Activated naive CD4-positive, alpha-beta T cell treated with anti-CD3 and anti-CD28 coated beads for 36 hours (primary cell): ENCODE measurements at regions of chr11 and their contacts with region 1.

Region 1: GRCh38 chr11:95231127-95231880 is at the start of gene SESN3:
- DNase-seq: peak; percentile 99
- H3K4me3 Mint-ChIP-seq: no peak within 1 kb of the TSS
- H3K27ac Mint-ChIP-seq: peak within 1 kb of the TSS; percentile 83
- H3K4me1 Mint-ChIP-seq: peaks cover 52% of the 10 kb centered on the region
- H3K27me3 Mint-ChIP-seq: no peaks in the 10 kb centered on the region
- total RNA-seq, gene SESN3: 17.5 to 18.1 TPM

Region 2: DNA sequence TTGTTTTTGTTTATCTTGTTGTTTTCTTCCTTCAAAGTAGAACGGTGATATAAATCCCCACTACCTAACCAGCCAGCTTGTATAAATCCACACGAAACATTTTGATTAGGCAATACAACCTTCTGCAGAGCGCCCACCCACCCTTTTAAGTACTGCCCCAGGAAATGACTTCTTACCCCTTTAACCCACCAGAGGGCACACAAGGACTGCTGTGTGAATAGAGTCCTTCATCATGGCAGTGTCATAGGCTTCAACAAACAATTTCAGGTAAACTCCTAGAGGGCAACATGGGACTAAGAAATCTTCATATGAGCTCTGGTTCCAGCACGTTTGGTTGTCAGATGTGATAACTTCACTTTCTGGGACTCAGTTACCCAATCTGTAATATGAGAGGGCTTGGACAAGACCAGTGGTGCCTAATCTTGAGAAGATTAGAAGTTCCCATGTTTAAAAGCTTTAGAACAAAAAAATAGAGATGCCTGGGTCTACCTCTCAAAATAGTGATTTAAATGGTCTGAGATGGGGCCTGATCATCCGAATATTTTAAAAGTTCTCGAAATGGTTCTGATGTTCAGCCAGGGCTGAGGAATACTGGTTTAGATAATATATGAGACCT is 608.1 kb before region 1 on chr11:
- CTCF ChIA-PET with region 1: no interaction called
- intact Hi-C with region 1: no loop called
- DNase-seq: peak; percentile 78
- H3K4me3 Mint-ChIP-seq: no peak overlapping the region
- H3K27ac Mint-ChIP-seq: no peak overlapping the region
- H3K4me1 Mint-ChIP-seq: no peaks in the 10 kb centered on the region
- H3K27me3 Mint-ChIP-seq: peaks cover 7% of the 10 kb centered on the region

Region 3: DNA sequence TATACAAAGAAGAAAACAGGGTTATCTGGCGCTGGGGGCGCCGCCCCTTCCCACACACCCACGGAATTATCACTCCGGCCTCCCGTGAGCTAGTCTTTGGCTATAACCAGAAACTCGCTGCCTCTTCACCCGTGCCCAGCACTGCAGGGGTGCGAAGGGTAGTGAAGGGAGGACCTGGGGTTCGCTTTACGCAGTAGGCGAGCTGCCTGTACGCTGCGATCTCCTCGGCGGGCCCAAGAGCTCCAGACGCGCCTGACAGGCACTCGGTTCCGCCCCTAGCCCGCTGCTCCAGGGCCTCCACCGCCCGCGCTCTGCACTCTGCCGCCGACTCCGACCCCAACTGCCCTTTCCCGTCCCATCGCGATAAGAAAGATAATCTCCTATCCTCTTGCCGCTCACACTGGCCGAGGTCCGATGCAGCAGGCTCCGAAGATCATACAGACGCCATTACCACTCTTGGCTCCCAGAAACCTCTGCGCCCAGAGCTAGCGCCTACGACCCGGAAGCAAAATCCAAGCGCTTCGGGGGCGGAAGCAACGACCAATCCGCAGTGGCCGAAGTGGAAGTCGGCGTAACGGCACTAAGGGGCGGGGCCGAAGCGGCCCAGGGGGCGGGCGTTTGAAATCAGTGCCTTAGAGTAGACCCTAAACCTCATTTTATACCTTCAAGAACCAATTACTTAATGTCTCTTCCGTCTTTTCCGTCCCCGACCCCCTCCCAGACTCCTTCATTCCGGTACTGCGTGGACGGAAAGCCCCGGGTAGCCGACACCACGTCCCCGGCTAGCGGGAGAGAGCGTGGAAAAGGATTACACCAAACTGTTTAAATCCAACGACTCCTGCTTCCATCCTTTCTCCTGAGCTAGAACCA is 258.0 kb before region 1 on chr11 and contains the starts of genes CWC15 and KDM4D:
- CTCF ChIA-PET with region 1: no interaction called
- intact Hi-C with region 1: loop called (anchors 5 kb)
- DNase-seq: peak; percentile 97
- H3K4me3 Mint-ChIP-seq: peak within 1 kb of the TSS; percentile 97
- H3K27ac Mint-ChIP-seq: peak within 1 kb of the TSS; percentile 89
- H3K4me1 Mint-ChIP-seq: peaks cover 38% of the 10 kb centered on the region
- H3K27me3 Mint-ChIP-seq: no peaks in the 10 kb centered on the region
- total RNA-seq, gene CWC15: 70.6 to 72.3 TPM
- total RNA-seq, gene KDM4D: 1.7 to 2.1 TPM

Region 4: GRCh38 chr11:95055283-95055897 is 175.9 kb before region 1 on chr11:
- CTCF ChIA-PET with region 1: no interaction called
- intact Hi-C with region 1: no loop called
- DNase-seq: no peak
- H3K4me3 Mint-ChIP-seq: no peak overlapping the region
- H3K27ac Mint-ChIP-seq: no peak overlapping the region
- H3K4me1 Mint-ChIP-seq: no peaks in the 10 kb centered on the region
- H3K27me3 Mint-ChIP-seq: peaks cover 21% of the 10 kb centered on the region

Region 5: GRCh38 chr11:95182397-95182796 is 48.9 kb before region 1 on chr11:
- CTCF ChIA-PET with region 1: no interaction called
- intact Hi-C with region 1: loop called (anchors 2 kb)
- DNase-seq: no peak
- H3K4me3 Mint-ChIP-seq: no peak overlapping the region
- H3K27ac Mint-ChIP-seq: peak overlapping the region; percentile 54
- H3K4me1 Mint-ChIP-seq: peaks cover 26% of the 10 kb centered on the region
- H3K27me3 Mint-ChIP-seq: no peaks in the 10 kb centered on the region

Region 6: DNA sequence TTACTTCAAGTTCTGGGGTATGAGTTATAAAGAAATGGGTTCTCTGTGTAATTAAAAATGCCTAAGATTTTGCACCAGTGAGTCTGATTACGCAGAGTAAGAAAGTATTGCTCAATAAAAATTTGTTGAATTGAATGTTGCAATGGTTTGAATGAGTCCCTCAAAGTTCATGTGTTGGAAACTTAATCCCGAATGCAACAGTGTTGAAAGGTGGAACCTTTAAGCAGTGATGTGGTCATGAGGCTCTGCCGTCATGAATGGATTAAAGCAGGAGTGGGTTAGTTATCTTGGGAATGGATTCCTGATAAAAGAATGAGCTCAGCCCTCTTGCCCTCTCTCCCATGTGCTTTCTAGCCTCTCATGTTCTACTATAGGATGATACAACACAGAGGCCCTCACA is 52.3 kb after region 1 on chr11:
- CTCF ChIA-PET with region 1: no interaction called
- intact Hi-C with region 1: loop called (anchors 2 kb)
- DNase-seq: no peak
- H3K4me3 Mint-ChIP-seq: no peak overlapping the region
- H3K27ac Mint-ChIP-seq: no peak overlapping the region
- H3K4me1 Mint-ChIP-seq: peaks cover 19% of the 10 kb centered on the region
- H3K27me3 Mint-ChIP-seq: no peaks in the 10 kb centered on the region

Region 7: DNA sequence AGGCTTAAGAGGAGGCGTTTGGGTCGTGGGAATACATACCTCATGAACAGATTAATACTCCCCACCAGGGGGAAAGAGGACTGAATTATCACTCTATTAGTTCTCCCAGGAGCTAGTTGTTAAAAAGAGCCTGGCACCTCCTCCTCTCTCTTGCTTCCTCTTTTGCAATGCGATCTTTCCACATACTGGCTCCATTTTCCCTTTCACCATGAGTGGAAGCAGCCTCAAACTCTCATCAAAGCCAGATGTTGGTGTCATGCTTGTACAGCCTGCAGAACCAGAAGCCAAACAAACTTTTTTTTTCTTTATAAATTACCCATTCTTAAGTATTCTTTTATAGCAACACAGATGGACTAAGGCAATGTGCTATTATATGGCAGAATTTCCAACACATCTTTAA is 299.8 kb after region 1 on chr11:
- CTCF ChIA-PET with region 1: no interaction called
- intact Hi-C with region 1: no loop called
- DNase-seq: no peak
- H3K4me3 Mint-ChIP-seq: no peak overlapping the region
- H3K27ac Mint-ChIP-seq: no peak overlapping the region
- H3K4me1 Mint-ChIP-seq: peaks cover 4% of the 10 kb centered on the region
- H3K27me3 Mint-ChIP-seq: no peaks in the 10 kb centered on the region

Region 8: GRCh38 chr11:95556342-95557163 is 325.2 kb after region 1 on chr11:
- CTCF ChIA-PET with region 1: interaction called, 3 read pairs
- intact Hi-C with region 1: loop called (anchors 1 kb)
- DNase-seq: peak; percentile 66
- H3K4me3 Mint-ChIP-seq: no peak overlapping the region
- H3K27ac Mint-ChIP-seq: peak overlapping the region; percentile 83
- H3K4me1 Mint-ChIP-seq: peaks cover 22% of the 10 kb centered on the region
- H3K27me3 Mint-ChIP-seq: no peaks in the 10 kb centered on the region

Region 9: DNA sequence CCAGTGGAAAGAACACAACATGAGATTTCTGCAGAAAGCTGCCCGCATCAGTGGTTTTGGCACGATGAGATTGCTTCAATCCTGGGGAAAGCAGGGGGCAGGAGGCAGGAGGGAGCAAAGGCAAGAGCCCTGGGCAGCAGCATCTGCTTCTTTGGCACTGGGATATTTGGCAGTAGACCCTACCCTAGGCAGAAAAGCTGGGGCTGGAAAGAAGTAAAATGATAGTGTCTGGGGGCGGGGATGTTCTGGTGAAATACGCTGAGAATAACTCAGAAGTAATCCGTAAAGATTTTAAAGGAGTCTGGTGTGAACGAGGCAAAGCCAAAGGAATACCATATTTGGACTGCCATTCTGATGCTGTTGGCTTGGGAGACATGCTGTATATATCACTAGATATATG is 496.3 kb after region 1 on chr11:
- CTCF ChIA-PET with region 1: no interaction called
- intact Hi-C with region 1: no loop called
- DNase-seq: no peak
- H3K4me3 Mint-ChIP-seq: no peak overlapping the region
- H3K27ac Mint-ChIP-seq: no peak overlapping the region
- H3K4me1 Mint-ChIP-seq: no peaks in the 10 kb centered on the region
- H3K27me3 Mint-ChIP-seq: no peaks in the 10 kb centered on the region

Region 10: DNA sequence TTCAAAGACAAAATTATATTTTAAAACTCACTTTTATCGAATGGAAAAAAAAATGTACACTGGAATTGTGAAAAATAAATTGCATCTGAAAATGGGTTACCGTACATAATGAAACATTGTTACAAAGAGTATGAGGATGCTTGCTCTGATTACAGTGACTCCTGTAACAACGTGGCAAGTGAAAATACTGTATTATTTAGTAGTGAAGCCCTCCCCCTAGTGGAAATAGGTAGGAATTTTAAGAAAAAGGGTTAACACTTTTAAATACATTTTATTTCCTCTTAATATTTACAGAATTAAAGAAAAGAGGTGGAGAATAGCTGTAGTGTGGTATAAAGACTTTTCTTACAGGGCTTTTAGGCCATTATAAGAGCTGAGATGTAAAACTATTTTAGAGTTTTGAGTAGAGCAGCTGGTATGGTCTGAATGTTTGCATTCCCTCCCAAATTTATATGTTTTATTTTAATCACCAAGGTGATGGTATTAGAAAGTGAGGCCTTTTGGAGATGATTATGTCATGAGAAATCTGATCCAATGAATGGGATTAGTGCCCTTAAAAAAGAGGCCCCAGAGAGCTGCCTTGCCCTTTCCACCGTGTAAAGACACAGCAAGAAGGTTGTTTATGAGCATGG is 533.1 kb after region 1 on chr11:
- CTCF ChIA-PET with region 1: interaction called, 3 read pairs
- intact Hi-C with region 1: loop called (anchors 1 kb)
- DNase-seq: no peak
- H3K4me3 Mint-ChIP-seq: no peak overlapping the region
- H3K27ac Mint-ChIP-seq: no peak overlapping the region
- H3K4me1 Mint-ChIP-seq: no peaks in the 10 kb centered on the region
- H3K27me3 Mint-ChIP-seq: peaks cover 1% of the 10 kb centered on the region

Region 11: GRCh38 chr11:96424693-96425092 is 1193.4 kb after region 1 on chr11:
- CTCF ChIA-PET with region 1: no interaction called
- intact Hi-C with region 1: loop called (anchors 1 kb)
- DNase-seq: no peak
- H3K4me3 Mint-ChIP-seq: no peak overlapping the region
- H3K27ac Mint-ChIP-seq: no peak overlapping the region
- H3K4me1 Mint-ChIP-seq: peaks cover 4% of the 10 kb centered on the region
- H3K27me3 Mint-ChIP-seq: peaks cover 17% of the 10 kb centered on the region